ENCODE measurements at regions of chr4 and their contacts with region 1.

Region 1: GRCh38 chr4:99710681-99711345 is 53.2 kb upstream of the C4orf54 start:
- DNase-seq: peak; percentile 33
- H3K4me3 Mint-ChIP-seq: no peak overlapping the region
- H3K27ac Mint-ChIP-seq: no peak overlapping the region
- H3K4me1 Mint-ChIP-seq: peaks cover 8% of the 10 kb centered on the region
- H3K27me3 Mint-ChIP-seq: peaks cover 7% of the 10 kb centered on the region

Region 2: GRCh38 chr4:99763635-99764101 is 52.9 kb after region 1 on chr4:
- CTCF ChIA-PET with region 1: no interaction called
- intact Hi-C with region 1: loop called (anchors 1 kb)
- DNase-seq: peak; percentile 38
- H3K4me3 Mint-ChIP-seq: no peak overlapping the region
- H3K27ac Mint-ChIP-seq: no peak overlapping the region
- H3K4me1 Mint-ChIP-seq: peaks cover 27% of the 10 kb centered on the region
- H3K27me3 Mint-ChIP-seq: peaks cover 13% of the 10 kb centered on the region

Region 3: GRCh38 chr4:99790796-99791617 is 80.2 kb after region 1 on chr4:
- CTCF ChIA-PET with region 1: no interaction called
- intact Hi-C with region 1: no loop called
- DNase-seq: no peak
- H3K4me3 Mint-ChIP-seq: no peak overlapping the region
- H3K27ac Mint-ChIP-seq: no peak overlapping the region
- H3K4me1 Mint-ChIP-seq: no peaks in the 10 kb centered on the region
- H3K27me3 Mint-ChIP-seq: peaks cover 14% of the 10 kb centered on the region

Region 4: GRCh38 chr4:100208964-100209363 is 498.2 kb after region 1 on chr4:
- CTCF ChIA-PET with region 1: no interaction called
- intact Hi-C with region 1: no loop called
- DNase-seq: no peak
- H3K4me3 Mint-ChIP-seq: no peak overlapping the region
- H3K27ac Mint-ChIP-seq: no peak overlapping the region
- H3K4me1 Mint-ChIP-seq: no peaks in the 10 kb centered on the region
- H3K27me3 Mint-ChIP-seq: peaks cover 16% of the 10 kb centered on the region

Measured in activated naive CD4-positive, alpha-beta T cell treated with anti-CD3 and anti-CD28 coated beads for 36 hours (primary cell).